ENCODE measurements at regions of chr5 and their contacts with region 1.

Region 1: GRCh38 chr5:108521841-108522506 is 140.1 kb upstream of the FBXL17 start:
- DNase-seq: no peak
- ATAC-seq: peak; percentile 71
- H3K4me3 Mint-ChIP-seq: no peak overlapping the region
- H3K27ac Mint-ChIP-seq: no peak overlapping the region
- H3K4me1 Mint-ChIP-seq: no peaks in the 10 kb centered on the region
- H3K27me3 Mint-ChIP-seq: peaks cover 9% of the 10 kb centered on the region

Region 2: GRCh38 chr5:108487951-108488350 is 34.0 kb before region 1 on chr5:
- CTCF ChIA-PET with region 1: no interaction called
- POLR2A ChIA-PET with region 1: interaction called, 15 read pairs
- intact Hi-C with region 1: no loop called
- DNase-seq: no peak
- ATAC-seq: no peak
- H3K4me3 Mint-ChIP-seq: no peak overlapping the region
- H3K27ac Mint-ChIP-seq: no peak overlapping the region
- H3K4me1 Mint-ChIP-seq: no peaks in the 10 kb centered on the region
- H3K27me3 Mint-ChIP-seq: peaks cover 21% of the 10 kb centered on the region

Region 3: DNA sequence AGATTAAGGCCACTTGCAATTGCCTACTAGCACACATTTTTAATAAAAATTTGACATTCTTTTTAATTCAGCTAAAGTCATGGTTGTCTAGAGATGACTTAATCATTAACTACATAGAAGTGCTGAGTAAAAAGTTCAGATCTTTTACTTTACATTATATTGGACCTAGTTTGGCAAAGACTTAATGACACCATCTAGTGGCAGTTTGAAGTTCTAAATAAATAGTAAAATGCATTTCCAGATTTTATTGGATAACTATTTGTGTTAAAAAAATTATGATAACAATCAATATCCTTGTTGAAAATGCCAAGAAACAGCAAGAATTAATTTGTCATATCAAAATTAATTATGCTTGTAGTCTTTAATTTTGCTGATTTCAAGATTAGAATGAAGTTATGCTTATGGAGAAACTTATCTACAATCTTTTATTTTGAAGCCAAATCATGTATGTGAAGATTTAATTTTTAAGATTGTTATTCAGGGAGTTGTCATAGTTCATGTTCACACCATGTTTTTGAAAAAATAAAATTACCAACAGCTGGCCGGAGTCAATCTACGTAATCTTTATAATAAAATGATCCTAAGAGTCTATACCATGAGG is 957.4 kb after region 1 on chr5:
- CTCF ChIA-PET with region 1: no interaction called
- POLR2A ChIA-PET with region 1: no interaction called
- intact Hi-C with region 1: loop called in 1 of 2 experiments (anchors 10 kb)
- DNase-seq: no peak
- ATAC-seq: no peak
- H3K4me3 Mint-ChIP-seq: no peak overlapping the region
- H3K27ac Mint-ChIP-seq: no peak overlapping the region
- H3K4me1 Mint-ChIP-seq: no peaks in the 10 kb centered on the region
- H3K27me3 Mint-ChIP-seq: peaks cover 8% of the 10 kb centered on the region

Measured in activated CD4-positive, alpha-beta T cell treated with anti-CD3 and anti-CD28 coated beads for 36 hours (primary cell).